ENCODE measurements at regions of chr1 and their contacts with region 1.

Region 1: GRCh38 chr1:203273206-203273868 is 32.0 kb upstream of the BTG2 start:
- DNase-seq: peak; percentile 84
- H3K4me3 Mint-ChIP-seq: peak overlapping the region; percentile 50
- H3K27ac Mint-ChIP-seq: peak overlapping the region; percentile 69
- H3K4me1 Mint-ChIP-seq: peaks cover 57% of the 10 kb centered on the region
- H3K27me3 Mint-ChIP-seq: no peaks in the 10 kb centered on the region

Region 2: GRCh38 chr1:203287109-203287893 is 14.0 kb after region 1 on chr1:
- intact Hi-C with region 1: loop called (anchors 1 kb)
- DNase-seq: peak; percentile 82
- H3K4me3 Mint-ChIP-seq: peak overlapping the region; percentile 76
- H3K27ac Mint-ChIP-seq: peak overlapping the region; percentile 99
- H3K4me1 Mint-ChIP-seq: peaks cover 66% of the 10 kb centered on the region
- H3K27me3 Mint-ChIP-seq: no peaks in the 10 kb centered on the region

Region 3: DNA sequence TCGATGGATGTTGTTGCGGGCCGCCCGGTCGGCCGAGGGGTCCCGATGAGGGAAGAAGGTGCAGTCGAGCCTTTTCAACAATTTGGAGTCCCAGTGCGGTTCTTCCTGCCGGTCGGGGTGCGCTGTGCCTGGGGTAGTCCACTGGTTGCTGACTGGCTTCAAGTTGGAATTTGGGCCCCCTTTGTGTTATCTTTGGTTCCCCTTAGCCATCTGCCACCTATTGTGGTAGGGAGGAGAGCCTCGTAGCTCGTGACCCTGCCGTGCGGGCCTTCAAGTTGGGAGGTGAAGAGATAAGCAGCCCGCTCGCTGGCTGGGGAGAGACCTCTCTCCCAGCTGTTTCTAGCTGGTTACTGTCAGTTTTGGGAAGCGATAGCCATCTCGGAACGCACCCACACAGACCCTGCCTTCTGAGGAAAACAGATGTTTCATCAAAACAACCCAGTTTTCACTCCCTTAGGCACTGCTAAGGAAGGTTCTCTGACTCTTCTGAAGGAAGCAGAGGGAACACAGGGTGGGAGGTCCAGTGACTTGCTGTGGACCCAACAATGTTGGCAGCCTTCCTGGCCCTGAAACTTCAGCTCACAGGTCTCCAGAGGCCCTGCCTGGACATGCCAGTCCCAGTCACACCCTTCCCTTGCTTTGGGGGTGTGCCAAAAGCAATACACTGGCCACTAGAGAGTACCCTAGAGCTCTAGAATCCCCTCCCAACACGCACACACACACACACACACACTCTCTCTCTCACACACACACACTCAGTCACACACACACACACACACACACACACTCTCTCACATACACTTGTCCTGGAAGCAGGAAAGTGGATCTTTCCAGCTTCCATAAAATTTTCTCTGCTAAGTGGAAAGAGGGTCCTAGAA is 33.0 kb after region 1 on chr1:
- intact Hi-C with region 1: loop called (anchors 1 kb)
- DNase-seq: peak; percentile 41
- H3K4me3 Mint-ChIP-seq: peak overlapping the region; percentile 99
- H3K27ac Mint-ChIP-seq: peak overlapping the region; percentile 87
- H3K4me1 Mint-ChIP-seq: peaks cover 54% of the 10 kb centered on the region
- H3K27me3 Mint-ChIP-seq: no peaks in the 10 kb centered on the region

Region 4: GRCh38 chr1:203340112-203340804 is 66.9 kb after region 1 on chr1:
- intact Hi-C with region 1: loop called (anchors 1 kb)
- DNase-seq: peak; percentile 43
- H3K4me3 Mint-ChIP-seq: no peak overlapping the region
- H3K27ac Mint-ChIP-seq: no peak overlapping the region
- H3K4me1 Mint-ChIP-seq: peaks cover 7% of the 10 kb centered on the region
- H3K27me3 Mint-ChIP-seq: peaks cover 27% of the 10 kb centered on the region

Measured in activated T-helper 2 cell treated with anti-CD3 and anti-CD28 coated beads, Interferon-gamma antibody, Interleukin-2, Interleukin-4, amounts not matched to agents 10 μg/mL and 5 μg/mL and 100 μg/mL, durations not matched to agents 14 hours and 24 hours and 36 hours (primary cell).